Astrocyte of the cerebellum (primary cell): ENCODE measurements at regions of chr3 and their contacts with region 1.

Region 1: GRCh38 chr3:73624821-73625665 is at the start of gene PDZRN3:
- DNase-seq: peak; percentile 55
- H3K4me3 ChIP-seq: peak within 1 kb of the TSS; percentile 81
- CTCF ChIP-seq: no peak

Region 2: DNA sequence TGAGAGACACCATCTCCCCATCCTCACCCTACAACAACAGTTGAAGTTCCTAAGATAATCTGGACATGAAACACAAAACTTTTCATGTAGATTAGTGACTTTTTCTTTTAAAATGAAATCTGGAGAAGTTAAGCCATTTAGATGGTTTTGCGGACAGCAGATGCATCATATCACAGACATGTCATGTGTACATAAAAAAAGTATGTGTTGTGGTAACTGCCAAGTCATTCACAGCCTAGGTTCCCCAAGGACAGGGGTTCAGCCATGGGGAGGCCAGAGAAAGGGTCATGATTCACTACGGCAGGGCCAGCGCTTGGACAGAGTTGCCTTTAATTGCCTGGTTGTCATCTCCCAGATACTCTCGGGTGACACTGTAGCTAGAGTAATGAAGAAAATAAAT is 163.5 kb before region 1 on chr3:
- in situ Hi-C with region 1: no loop called
- DNase-seq: no peak
- H3K4me3 ChIP-seq: no peak overlapping the region
- CTCF ChIP-seq: no peak

Region 3: GRCh38 chr3:73502609-73503583 is 122.1 kb before region 1 on chr3:
- in situ Hi-C with region 1: loop called (anchors 25 kb)
- DNase-seq: peak; percentile 86
- H3K4me3 ChIP-seq: no peak overlapping the region
- CTCF ChIP-seq: peak; percentile 86

Region 4: GRCh38 chr3:73563896-73564582 is 61.0 kb before region 1 on chr3:
- in situ Hi-C with region 1: no loop called
- DNase-seq: no peak
- H3K4me3 ChIP-seq: no peak overlapping the region
- CTCF ChIP-seq: no peak